ENCODE measurements at regions of chr10 and their contacts with region 1.

Region 1: GRCh38 chr10:80662577-80663261 is 125.0 kb downstream of the SH2D4B start:
- DNase-seq: peak; percentile 85
- H3K4me3 ChIP-seq: peak overlapping the region in 1 of 4 donors; percentile 19
- H3K27ac ChIP-seq: peak overlapping the region; percentile 41 to 70 (median 58)
- H3K4me1 ChIP-seq: peaks cover 0 to 13% (median 5%) of the 10 kb centered on the region in 4 donors
- H3K27me3 ChIP-seq: no peaks in the 10 kb centered on the region
- CTCF ChIP-seq: peak; percentile 87 to 91 (median 89)
- EP300 ChIP-seq: no peak
- POLR2A ChIP-seq: no peak

Region 2: DNA sequence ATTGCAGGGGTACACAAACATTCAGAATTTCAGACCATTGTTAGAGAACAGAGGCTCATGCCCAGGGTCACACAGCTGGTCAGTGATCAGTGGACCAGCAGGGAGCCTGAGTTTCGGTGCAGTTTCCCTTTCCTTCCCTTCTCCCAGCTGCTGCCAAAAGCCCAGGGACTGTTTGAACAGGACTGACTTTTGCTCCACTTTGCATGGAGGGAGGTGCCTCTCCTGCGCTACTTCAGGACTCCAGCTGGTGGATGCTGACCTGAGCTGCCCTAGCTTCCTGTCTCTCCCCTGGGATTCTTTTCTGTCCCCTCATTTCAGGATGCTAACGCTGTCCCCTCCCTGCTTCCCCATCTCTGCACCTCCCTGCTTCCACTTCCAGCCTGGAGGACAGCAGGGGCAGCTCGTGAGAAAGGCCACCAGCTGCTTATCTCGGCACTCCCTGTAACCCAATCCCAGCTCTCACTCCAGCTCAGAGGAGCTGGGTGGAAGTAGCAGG is 110.5 kb before region 1 on chr10:
- in situ Hi-C with region 1: no loop called
- intact Hi-C with region 1: no loop called
- DNase-seq: peak; percentile 66
- H3K4me3 ChIP-seq: no peak overlapping the region
- H3K27ac ChIP-seq: peak overlapping the region; percentile 4 to 59 (median 36)
- H3K4me1 ChIP-seq: peaks cover 0 to 30% (median 22%) of the 10 kb centered on the region in 4 donors
- H3K27me3 ChIP-seq: no peaks in the 10 kb centered on the region
- CTCF ChIP-seq: peak in 1 of 5 experiments; percentile 19
- EP300 ChIP-seq: no peak
- POLR2A ChIP-seq: no peak

Region 3: DNA sequence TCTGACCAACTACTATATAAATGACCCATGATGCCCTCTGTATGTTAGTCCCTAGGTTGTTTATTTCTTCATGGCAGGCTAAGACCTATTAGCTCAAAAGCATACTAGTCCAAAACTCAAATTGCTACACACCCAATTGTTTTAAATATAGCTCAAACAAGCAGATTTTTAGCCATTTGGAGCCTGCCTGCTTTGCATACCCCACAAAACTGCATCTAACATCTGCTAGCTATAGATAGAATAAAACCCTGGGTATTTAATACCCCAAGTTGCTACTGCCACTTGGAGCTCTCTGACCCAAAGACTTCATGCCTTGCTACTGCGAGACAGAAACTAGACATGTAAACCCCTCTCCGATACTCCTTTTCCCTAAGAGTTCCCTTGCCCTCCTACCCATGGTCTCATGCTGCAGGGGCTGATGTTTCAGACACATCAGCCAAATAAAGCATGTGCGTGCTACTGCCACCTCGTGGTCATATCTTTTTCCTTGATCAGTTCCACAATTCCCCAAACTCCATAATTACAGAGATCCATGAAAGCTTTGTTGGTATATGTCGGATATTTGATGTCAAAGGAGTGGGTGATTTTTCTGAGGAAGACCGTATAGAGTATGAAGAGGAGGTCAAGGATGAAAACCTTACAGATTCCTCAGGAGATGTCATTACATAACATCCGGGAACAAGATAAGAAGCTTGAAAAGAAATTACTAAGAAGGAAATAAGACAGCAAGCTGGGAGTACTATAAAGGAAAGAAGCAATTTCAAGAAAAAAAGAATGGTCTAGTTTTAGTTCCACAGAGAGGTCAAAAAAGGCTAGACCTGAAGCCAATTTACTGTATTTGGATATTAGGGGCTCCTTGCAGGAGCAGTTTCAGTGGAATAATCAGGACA is 261.6 kb after region 1 on chr10:
- in situ Hi-C with region 1: loop called in 2 of 4 experiments (anchors 10 to 25 kb)
- intact Hi-C with region 1: no loop called
- DNase-seq: peak; percentile 41
- H3K4me3 ChIP-seq: no peak overlapping the region
- H3K27ac ChIP-seq: no peak overlapping the region
- H3K4me1 ChIP-seq: no peaks in the 10 kb centered on the region
- H3K27me3 ChIP-seq: no peaks in the 10 kb centered on the region
- CTCF ChIP-seq: peak; percentile 46 to 69 (median 57)
- EP300 ChIP-seq: no peak
- POLR2A ChIP-seq: no peak

Region 4: DNA sequence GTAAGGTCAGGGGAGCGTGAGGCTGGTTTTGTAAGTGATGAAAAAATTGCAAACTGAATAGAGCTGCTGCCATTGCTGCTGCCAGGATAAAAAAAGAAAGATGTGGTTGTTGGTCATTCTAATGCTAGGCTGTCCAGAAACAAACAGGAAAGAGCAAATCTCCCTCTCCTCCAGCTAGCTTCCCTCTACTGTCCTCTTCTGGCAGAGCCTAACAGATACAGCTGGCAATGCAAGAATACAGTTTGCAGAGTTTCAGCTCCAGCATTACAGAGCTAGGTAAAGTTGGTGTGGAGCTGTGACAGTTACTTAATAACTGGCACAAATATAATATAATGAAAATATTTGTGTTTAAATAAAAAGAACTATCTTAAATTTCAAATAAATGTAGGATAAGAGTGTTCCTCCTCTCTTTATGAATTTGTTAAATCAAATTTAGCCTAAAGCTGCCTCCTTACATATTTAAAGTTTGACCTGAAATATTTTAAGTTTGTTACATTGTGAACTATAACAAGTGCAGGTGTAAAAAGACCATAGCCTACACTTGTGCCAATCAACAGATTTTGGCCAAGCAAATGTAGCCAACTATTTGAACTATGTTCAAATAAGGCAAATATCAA is 282.7 kb after region 1 on chr10:
- in situ Hi-C with region 1: loop called in 1 of 4 experiments (anchors 25 kb)
- intact Hi-C with region 1: no loop called
- DNase-seq: no peak
- H3K4me3 ChIP-seq: no peak overlapping the region
- H3K27ac ChIP-seq: no peak overlapping the region
- H3K4me1 ChIP-seq: no peaks in the 10 kb centered on the region
- H3K27me3 ChIP-seq: no peaks in the 10 kb centered on the region
- CTCF ChIP-seq: peak; percentile 8 to 33 (median 24)
- EP300 ChIP-seq: no peak
- POLR2A ChIP-seq: no peak